Activated naive CD4-positive, alpha-beta T cell treated with anti-CD3 and anti-CD28 coated beads for 36 hours (primary cell): ENCODE measurements at regions of chr6 and their contacts with region 1.

Region 1: DNA sequence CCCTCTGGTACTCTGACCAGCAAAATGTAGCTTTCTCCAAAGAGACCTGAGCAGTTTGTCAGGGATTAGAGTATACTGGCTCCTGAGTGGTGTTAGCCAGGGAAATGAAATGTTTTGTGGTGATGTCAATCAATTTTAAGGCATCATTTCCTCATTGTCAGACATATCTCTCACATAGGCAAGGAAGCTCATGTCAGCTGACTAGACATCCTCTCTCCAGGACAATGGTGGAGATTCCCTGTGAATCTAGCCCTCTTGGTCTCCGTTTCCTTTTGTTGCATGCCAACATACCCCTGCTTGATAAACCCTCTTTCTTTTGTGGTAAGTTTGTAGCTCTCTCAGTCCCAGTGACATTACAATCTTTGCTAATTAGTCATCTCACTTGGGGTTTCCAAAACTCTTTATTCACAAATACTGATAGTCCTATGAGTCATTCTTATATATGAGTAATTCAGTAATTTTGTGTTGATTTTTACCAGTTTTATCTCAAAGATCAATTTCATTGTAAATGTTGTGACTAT is 135.6 kb upstream of the PTPRK start:
- DNase-seq: peak; percentile 50
- H3K4me3 Mint-ChIP-seq: no peak overlapping the region
- H3K27ac Mint-ChIP-seq: peak overlapping the region; percentile 69
- H3K4me1 Mint-ChIP-seq: peaks cover 31% of the 10 kb centered on the region
- H3K27me3 Mint-ChIP-seq: peaks cover under 1% of the 10 kb centered on the region

Region 2: DNA sequence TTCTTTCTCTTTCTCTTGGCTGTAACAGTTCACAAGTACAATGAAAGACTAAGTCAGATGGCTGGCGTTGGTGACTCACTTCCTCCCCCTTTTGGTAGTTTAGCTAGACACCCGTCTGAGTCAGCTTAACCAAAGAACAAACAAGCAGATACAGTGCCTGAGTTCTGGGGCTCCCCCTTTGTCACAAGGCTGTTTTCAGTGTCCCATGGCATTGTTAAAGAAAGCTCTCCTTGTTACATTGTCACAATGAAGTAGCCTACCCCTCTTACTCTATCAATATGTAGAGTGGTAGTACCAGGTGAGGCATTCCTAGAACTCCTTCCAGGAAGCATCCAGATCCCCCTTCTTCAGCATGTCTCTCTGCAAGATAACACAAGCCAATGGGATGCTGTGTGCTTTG is 1235.5 kb before region 1 on chr6:
- CTCF ChIA-PET with region 1: no interaction called
- intact Hi-C with region 1: loop called (anchors 10 kb)
- DNase-seq: peak; percentile 92
- H3K4me3 Mint-ChIP-seq: no peak overlapping the region
- H3K27ac Mint-ChIP-seq: peak overlapping the region; percentile 68
- H3K4me1 Mint-ChIP-seq: peaks cover 26% of the 10 kb centered on the region
- H3K27me3 Mint-ChIP-seq: no peaks in the 10 kb centered on the region

Region 3: GRCh38 chr6:127748290-127748689 is 907.7 kb before region 1 on chr6:
- CTCF ChIA-PET with region 1: no interaction called
- intact Hi-C with region 1: loop called (anchors 2 kb)
- DNase-seq: no peak
- H3K4me3 Mint-ChIP-seq: peak overlapping the region; percentile 62
- H3K27ac Mint-ChIP-seq: peak overlapping the region; percentile 83
- H3K4me1 Mint-ChIP-seq: peaks cover 61% of the 10 kb centered on the region
- H3K27me3 Mint-ChIP-seq: no peaks in the 10 kb centered on the region

Region 4: DNA sequence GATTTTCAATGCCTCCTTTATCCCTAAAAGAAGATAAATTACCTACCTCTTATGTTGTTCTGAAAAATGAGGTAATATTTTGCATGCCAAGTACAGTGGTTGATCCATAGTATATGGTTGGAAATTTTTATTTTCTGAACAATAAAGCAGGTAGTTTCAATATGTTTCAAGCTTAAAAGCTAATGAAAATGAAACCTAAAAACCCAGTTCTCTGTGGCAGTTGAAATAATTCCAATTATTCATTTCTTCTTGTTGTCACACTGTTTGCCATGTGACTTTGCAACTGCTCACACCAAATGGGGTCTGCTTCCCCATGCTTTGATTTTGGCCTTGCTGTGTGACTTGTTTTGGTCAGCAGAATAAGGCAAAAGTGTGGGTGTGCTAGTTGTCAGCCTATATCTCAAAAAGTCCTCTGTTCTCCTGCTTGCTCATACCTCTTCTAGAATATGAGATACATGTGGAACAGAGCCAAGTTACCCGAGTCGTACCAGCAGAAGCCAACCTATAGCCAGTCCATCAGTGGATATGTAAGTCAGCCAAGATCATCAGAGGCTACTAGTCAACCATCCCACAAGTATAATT is 557.9 kb before region 1 on chr6:
- CTCF ChIA-PET with region 1: no interaction called
- intact Hi-C with region 1: loop called (anchors 5 kb)
- DNase-seq: no peak
- H3K4me3 Mint-ChIP-seq: no peak overlapping the region
- H3K27ac Mint-ChIP-seq: no peak overlapping the region
- H3K4me1 Mint-ChIP-seq: peaks cover 19% of the 10 kb centered on the region
- H3K27me3 Mint-ChIP-seq: no peaks in the 10 kb centered on the region

Region 5: GRCh38 chr6:128350416-128351254 is 305.4 kb before region 1 on chr6:
- CTCF ChIA-PET with region 1: no interaction called
- intact Hi-C with region 1: no loop called
- DNase-seq: no peak
- H3K4me3 Mint-ChIP-seq: no peak overlapping the region
- H3K27ac Mint-ChIP-seq: no peak overlapping the region
- H3K4me1 Mint-ChIP-seq: peaks cover 2% of the 10 kb centered on the region
- H3K27me3 Mint-ChIP-seq: no peaks in the 10 kb centered on the region

Region 6: DNA sequence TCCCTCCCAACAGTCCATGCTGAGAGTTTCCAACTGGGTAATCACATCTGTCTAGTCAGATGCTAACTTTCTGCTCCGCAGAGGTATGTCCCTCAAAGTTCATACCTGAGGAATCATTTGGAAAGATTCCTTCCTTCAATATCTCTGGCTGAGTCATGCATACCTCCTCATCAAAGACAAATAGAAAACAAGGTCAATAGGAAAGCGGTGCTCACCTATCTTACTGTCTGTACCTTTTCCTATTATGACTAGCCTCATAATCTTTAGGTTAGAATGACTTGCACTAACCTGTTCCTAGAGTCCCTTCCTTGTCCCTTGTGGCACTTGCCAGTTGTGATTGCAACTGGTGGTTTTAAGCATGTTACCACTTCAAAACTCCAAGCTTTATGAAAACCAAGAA is 57.5 kb before region 1 on chr6:
- CTCF ChIA-PET with region 1: interaction called, 3 read pairs
- intact Hi-C with region 1: loop called (anchors 1 kb)
- DNase-seq: no peak
- H3K4me3 Mint-ChIP-seq: no peak overlapping the region
- H3K27ac Mint-ChIP-seq: no peak overlapping the region
- H3K4me1 Mint-ChIP-seq: peaks cover 23% of the 10 kb centered on the region
- H3K27me3 Mint-ChIP-seq: peaks cover 7% of the 10 kb centered on the region

Region 7: DNA sequence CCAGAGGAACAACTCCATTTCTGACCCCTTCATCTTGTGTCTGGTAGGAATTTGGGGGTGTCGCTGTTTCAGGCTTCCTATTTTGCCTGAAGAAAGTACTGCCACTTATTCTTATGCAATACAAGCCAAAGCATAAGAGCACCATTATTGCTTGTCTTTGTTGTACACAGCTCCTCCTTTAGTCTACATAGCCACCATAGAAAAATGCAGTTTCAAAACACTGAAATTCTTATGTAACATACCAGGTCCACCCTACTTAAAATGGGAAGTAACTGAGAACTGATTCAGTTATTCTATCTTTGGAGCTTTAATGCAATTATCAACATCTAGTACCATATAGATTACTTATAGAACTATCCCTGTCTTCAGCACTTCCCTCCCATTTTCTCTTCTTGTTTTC is 798.5 kb after region 1 on chr6:
- CTCF ChIA-PET with region 1: no interaction called
- intact Hi-C with region 1: loop called (anchors 1 kb)
- DNase-seq: no peak
- H3K4me3 Mint-ChIP-seq: no peak overlapping the region
- H3K27ac Mint-ChIP-seq: no peak overlapping the region
- H3K4me1 Mint-ChIP-seq: peaks cover 50% of the 10 kb centered on the region
- H3K27me3 Mint-ChIP-seq: no peaks in the 10 kb centered on the region

Region 8: GRCh38 chr6:129748212-129748900 is 1092.3 kb after region 1 on chr6:
- CTCF ChIA-PET with region 1: no interaction called
- intact Hi-C with region 1: loop called (anchors 1 kb)
- DNase-seq: peak; percentile 81
- H3K4me3 Mint-ChIP-seq: peak overlapping the region; percentile 46
- H3K27ac Mint-ChIP-seq: peak overlapping the region; percentile 93
- H3K4me1 Mint-ChIP-seq: peaks cover 68% of the 10 kb centered on the region
- H3K27me3 Mint-ChIP-seq: no peaks in the 10 kb centered on the region